PC-3 (cell line): ENCODE measurements at regions of chr14 and their contacts with region 1.

Region 1: GRCh38 chr14:52918486-52918885 is 32.4 kb downstream of the FERMT2 start:
- DNase-seq: peak; percentile 91
- ATAC-seq: peak; percentile 64
- H3K4me3 ChIP-seq: no peak overlapping the region
- H3K27ac ChIP-seq: peak overlapping the region; percentile 77
- H3K4me1 ChIP-seq: peaks cover 69% of the 10 kb centered on the region
- H3K27me3 ChIP-seq: no peaks in the 10 kb centered on the region
- CTCF ChIP-seq: no peak

Region 2: DNA sequence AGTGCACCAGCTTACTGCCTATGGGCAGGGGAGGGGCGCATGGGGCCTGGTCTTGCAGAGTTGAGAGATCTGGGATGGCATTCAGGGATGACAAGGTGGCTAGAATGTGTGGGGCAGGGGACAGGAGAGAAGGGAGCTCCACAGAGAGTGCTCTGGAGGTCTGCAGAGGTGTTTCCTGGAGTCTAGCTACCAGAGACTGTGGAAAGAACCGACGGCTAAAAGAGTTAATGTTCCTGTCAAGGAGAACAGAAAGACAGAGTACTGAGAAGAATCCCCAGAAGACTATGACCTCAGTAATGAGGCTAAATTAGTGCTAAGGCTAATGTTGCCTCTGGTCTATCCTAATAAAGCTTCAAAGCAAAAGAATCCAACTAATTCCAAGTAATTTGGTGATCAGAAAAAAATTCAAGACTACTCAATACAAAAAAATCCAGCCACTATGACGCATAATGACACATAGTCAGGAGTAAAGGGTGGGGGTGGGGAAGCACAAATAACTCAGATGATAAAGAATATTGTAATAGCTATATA is 12.3 kb before region 1 on chr14:
- CTCF ChIA-PET with region 1: no interaction called
- POLR2A ChIA-PET with region 1: interaction called, 19 read pairs
- intact Hi-C with region 1: loop called (anchors 1 kb)
- DNase-seq: peak; percentile 94
- ATAC-seq: peak; percentile 67
- H3K4me3 ChIP-seq: peak overlapping the region; percentile 44
- H3K27ac ChIP-seq: peak overlapping the region; percentile 90
- H3K4me1 ChIP-seq: peaks cover 53% of the 10 kb centered on the region
- H3K27me3 ChIP-seq: no peaks in the 10 kb centered on the region
- CTCF ChIP-seq: no peak